ENCODE measurements at regions of chr16 and their contacts with region 1.

Region 1: GRCh38 chr16:12067714-12068401 is 91.3 kb downstream of the SNX29 start:
- DNase-seq: peak; percentile 83
- H3K4me3 Mint-ChIP-seq: no peak overlapping the region
- H3K27ac Mint-ChIP-seq: no peak overlapping the region
- H3K4me1 Mint-ChIP-seq: no peaks in the 10 kb centered on the region
- H3K27me3 Mint-ChIP-seq: no peaks in the 10 kb centered on the region

Region 2: GRCh38 chr16:11535471-11535870 is 532.4 kb before region 1 on chr16:
- CTCF ChIA-PET with region 1: interaction called, 3 read pairs
- intact Hi-C with region 1: loop called (anchors 1 kb)
- DNase-seq: no peak
- H3K4me3 Mint-ChIP-seq: no peak overlapping the region
- H3K27ac Mint-ChIP-seq: no peak overlapping the region
- H3K4me1 Mint-ChIP-seq: peaks cover 13% of the 10 kb centered on the region
- H3K27me3 Mint-ChIP-seq: no peaks in the 10 kb centered on the region

Region 3: GRCh38 chr16:11613381-11614303 is 454.2 kb before region 1 on chr16:
- CTCF ChIA-PET with region 1: no interaction called
- intact Hi-C with region 1: no loop called
- DNase-seq: no peak
- H3K4me3 Mint-ChIP-seq: no peak overlapping the region
- H3K27ac Mint-ChIP-seq: no peak overlapping the region
- H3K4me1 Mint-ChIP-seq: peaks cover 28% of the 10 kb centered on the region
- H3K27me3 Mint-ChIP-seq: no peaks in the 10 kb centered on the region

Region 4: DNA sequence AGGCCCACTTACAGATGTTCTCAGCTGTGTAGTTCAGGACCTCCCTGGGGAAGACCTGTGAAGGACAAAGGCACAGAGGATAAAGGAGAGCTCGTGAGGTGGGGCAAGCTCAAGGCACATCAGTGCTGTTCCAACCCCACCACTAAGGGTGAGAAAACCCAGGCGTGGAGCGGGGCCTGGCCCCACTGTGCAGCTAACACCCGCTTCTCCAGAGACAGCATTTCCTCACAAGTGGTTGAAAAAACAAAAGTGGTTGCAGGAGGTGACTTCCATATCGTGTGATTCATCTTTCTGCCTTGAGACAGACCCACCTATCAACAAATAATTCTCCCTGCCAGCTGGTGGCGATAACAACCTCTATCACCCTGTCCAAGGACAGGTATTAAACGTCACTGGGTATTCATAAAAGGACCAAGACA is 369.6 kb before region 1 on chr16:
- CTCF ChIA-PET with region 1: no interaction called
- intact Hi-C with region 1: loop called (anchors 5 kb)
- DNase-seq: peak; percentile 75
- H3K4me3 Mint-ChIP-seq: no peak overlapping the region
- H3K27ac Mint-ChIP-seq: peak overlapping the region; percentile 15
- H3K4me1 Mint-ChIP-seq: peaks cover 39% of the 10 kb centered on the region
- H3K27me3 Mint-ChIP-seq: no peaks in the 10 kb centered on the region

Region 5: GRCh38 chr16:11949527-11949926 is 118.3 kb before region 1 on chr16:
- CTCF ChIA-PET with region 1: interaction called, 34 read pairs
- intact Hi-C with region 1: loop called (anchors 1 kb)
- DNase-seq: peak; percentile 51
- H3K4me3 Mint-ChIP-seq: no peak overlapping the region
- H3K27ac Mint-ChIP-seq: no peak overlapping the region
- H3K4me1 Mint-ChIP-seq: no peaks in the 10 kb centered on the region
- H3K27me3 Mint-ChIP-seq: no peaks in the 10 kb centered on the region

Region 6: DNA sequence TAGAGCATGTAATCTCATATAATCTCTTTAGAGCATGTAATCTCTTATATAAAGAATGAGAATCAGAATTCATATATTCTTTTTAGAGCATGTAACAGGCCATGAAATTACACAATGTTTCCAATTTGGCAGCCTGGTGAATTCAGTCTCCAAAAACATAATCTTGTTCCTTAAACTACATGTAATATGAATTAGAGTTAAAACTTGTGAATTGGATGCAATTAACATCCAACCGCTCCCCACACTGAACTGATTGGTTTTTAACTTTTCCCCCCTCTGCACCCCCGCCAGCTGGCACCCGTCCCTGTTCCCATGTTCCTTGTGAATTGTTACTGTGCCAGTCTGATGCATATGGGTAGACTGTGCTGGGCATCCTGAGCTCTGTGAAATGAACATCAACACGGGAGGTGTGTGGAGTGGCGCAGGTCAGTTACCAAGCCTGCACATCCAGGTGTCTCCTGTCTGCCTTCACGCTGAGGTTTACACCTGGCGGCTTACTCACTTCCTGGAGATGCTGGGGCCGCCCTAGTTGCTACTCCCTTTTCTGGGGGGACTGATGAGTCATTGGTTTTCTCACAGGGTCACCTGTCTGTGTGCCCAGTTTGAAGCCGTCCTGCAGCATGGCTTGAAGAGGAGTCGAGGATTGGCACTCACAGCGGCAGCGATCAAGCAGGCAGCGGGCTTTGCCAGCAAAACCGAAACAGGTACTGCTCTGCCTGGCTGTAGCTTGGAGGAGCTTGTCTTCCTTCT is 40.9 kb before region 1 on chr16:
- CTCF ChIA-PET with region 1: no interaction called
- intact Hi-C with region 1: no loop called
- DNase-seq: no peak
- H3K4me3 Mint-ChIP-seq: no peak overlapping the region
- H3K27ac Mint-ChIP-seq: no peak overlapping the region
- H3K4me1 Mint-ChIP-seq: peaks cover 4% of the 10 kb centered on the region
- H3K27me3 Mint-ChIP-seq: no peaks in the 10 kb centered on the region

Region 7: DNA sequence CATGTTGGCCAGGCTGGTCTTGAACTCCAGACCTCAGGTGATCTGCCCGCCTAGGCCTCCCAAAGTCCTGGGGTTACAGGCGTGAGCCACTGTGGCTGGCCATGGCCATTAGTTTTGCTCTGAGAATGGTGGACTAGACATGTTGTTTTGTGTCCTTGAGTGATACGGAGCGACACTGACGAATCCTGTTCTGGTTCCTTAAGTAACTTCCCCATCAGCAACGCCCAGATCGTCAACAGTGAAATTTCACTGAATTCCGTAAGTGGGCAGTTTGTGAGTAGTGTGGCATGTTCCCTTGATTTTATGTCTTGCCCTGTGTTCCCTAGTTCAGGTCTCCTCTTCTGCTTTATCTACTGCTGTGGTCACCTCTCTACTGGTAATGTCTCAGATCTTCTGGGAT is 23.9 kb before region 1 on chr16:
- CTCF ChIA-PET with region 1: no interaction called
- intact Hi-C with region 1: no loop called
- DNase-seq: no peak
- H3K4me3 Mint-ChIP-seq: no peak overlapping the region
- H3K27ac Mint-ChIP-seq: no peak overlapping the region
- H3K4me1 Mint-ChIP-seq: no peaks in the 10 kb centered on the region
- H3K27me3 Mint-ChIP-seq: no peaks in the 10 kb centered on the region

Region 8: DNA sequence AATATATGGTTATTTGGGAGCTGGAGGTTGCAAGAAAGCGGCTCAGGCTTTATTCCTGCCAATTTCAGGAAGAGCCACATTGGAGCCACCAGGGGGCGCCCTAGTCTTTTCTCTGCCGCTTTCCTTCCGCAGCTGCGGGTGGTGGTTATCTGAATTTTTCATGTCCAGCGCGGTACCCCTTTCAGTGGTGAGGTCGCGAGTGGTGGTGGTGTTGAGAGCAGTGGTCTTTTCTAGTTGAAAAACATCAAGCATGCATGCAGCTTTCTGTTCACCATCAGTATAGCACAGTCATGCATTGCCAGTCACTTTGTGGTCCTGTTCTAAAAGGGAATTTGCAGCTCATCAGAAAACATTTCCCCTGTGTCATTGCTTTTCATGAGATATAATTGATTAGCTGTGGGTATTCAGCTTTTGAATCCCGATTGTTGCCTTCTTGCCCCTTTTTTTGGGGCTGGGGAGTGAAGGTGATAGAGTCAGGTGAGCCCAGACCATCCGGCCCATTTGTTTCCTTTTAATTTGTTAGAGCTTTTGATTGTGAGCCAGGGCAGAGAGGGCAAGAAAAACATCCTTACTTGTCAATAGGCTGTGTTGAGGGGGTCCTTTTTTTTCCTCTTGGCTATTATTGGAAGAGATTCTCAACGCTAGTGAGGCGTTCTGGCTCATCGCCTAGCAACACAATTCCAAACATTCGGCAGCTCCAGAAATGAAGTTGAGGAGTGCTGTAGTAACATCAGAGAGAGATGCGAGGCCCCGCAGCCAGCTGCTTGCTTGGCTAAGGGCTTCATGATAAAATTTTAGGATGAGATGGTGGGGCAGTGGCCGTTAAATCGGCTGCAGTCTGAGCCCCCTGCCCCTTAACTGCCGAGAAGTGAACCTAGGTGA is 27.7 kb after region 1 on chr16:
- CTCF ChIA-PET with region 1: interaction called, 16 read pairs
- intact Hi-C with region 1: no loop called
- DNase-seq: peak; percentile 74
- H3K4me3 Mint-ChIP-seq: peak overlapping the region; percentile 50
- H3K27ac Mint-ChIP-seq: no peak overlapping the region
- H3K4me1 Mint-ChIP-seq: peaks cover 11% of the 10 kb centered on the region
- H3K27me3 Mint-ChIP-seq: no peaks in the 10 kb centered on the region

Region 9: GRCh38 chr16:12132290-12132689 is 64.4 kb after region 1 on chr16:
- CTCF ChIA-PET with region 1: no interaction called
- intact Hi-C with region 1: no loop called
- DNase-seq: no peak
- H3K4me3 Mint-ChIP-seq: no peak overlapping the region
- H3K27ac Mint-ChIP-seq: no peak overlapping the region
- H3K4me1 Mint-ChIP-seq: no peaks in the 10 kb centered on the region
- H3K27me3 Mint-ChIP-seq: no peaks in the 10 kb centered on the region

Measured in activated naive CD4-positive, alpha-beta T cell treated with anti-CD3 and anti-CD28 coated beads for 36 hours (primary cell).